ENCODE measurements at regions of chr12 and their contacts with region 1.

Region 1: DNA sequence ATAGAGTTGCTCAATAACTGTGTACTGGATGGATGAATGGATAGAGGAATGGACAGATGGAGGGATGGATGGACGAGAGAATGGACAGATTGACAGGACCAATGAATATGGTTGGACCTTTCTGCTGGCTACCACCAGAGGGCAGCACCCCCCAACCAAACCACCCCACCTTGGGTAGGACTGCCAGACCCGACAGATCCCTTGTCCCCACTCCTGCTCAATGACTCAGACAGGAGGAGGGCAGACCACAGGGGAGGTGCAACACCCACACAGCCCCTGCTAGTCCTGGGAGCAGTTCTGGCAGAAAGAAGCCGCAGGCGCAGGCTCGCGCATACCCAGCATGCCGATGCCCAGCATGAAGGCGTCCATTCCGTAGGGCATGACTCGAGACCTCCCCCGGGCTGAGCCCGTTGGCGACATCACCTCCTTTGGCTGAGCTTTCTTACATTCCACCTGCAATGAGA is 12.4 kb downstream of the MSI1 start:
- DNase-seq: peak; percentile 82
- ATAC-seq: peak; percentile 88
- H3K4me3 Mint-ChIP-seq: no peak overlapping the region
- H3K27ac Mint-ChIP-seq: no peak overlapping the region
- H3K4me1 Mint-ChIP-seq: no peaks in the 10 kb centered on the region
- H3K27me3 Mint-ChIP-seq: peaks cover 27% of the 10 kb centered on the region

Region 2: DNA sequence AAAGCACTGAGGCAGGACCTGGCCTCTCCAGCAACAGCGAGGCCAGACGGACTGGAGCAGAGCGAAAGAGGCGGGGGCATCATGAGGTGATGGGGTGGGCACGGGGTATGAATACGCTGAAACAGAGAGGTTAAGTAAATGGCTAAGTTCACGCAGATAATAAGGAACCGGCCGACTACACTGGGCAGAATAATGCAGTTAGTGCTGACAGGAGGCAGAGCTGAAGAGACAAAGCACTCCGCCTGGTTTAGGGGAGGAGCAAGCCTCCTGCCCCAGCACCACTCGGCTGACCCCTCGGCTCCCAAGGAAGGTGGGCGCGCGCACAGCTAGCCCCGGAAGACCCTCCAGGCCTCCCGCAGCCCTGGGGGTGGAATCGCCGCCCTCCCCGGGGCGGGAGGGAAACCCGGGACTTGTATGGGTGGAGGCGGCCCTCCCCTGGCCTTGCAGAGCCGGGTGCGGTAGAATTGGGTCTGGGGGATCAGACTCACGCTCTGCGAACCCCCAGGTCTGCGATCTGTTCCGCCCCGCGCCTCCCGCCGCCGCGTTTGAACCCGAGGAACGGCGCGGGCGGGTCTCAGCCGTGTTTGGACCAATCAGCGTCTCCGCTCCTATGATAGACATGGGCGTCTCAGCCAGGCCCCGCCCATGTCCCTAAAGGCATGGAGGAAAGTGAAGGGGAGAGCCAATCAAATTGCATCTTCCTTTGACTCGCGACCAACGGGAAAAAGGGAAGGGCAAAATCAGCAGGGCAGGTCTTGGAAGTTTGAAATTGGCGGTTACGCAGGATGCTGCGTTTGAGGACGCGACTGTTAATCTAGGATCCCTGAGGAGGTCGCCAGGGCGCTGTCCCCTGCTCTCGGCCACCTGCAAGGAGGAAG is 479.6 kb before region 1 on chr12 and contains the start of gene CIT:
- CTCF ChIA-PET with region 1: no interaction called
- POLR2A ChIA-PET with region 1: no interaction called
- DNase-seq: peak; percentile 92
- ATAC-seq: peak; percentile 100
- H3K4me3 Mint-ChIP-seq: peak within 1 kb of the TSS; percentile 92
- H3K27ac Mint-ChIP-seq: peak within 1 kb of the TSS; percentile 80
- H3K4me1 Mint-ChIP-seq: peaks cover 24% of the 10 kb centered on the region
- H3K27me3 Mint-ChIP-seq: peaks cover 14% of the 10 kb centered on the region
- total RNA-seq, gene CIT: 111 to 115 TPM

Region 3: DNA sequence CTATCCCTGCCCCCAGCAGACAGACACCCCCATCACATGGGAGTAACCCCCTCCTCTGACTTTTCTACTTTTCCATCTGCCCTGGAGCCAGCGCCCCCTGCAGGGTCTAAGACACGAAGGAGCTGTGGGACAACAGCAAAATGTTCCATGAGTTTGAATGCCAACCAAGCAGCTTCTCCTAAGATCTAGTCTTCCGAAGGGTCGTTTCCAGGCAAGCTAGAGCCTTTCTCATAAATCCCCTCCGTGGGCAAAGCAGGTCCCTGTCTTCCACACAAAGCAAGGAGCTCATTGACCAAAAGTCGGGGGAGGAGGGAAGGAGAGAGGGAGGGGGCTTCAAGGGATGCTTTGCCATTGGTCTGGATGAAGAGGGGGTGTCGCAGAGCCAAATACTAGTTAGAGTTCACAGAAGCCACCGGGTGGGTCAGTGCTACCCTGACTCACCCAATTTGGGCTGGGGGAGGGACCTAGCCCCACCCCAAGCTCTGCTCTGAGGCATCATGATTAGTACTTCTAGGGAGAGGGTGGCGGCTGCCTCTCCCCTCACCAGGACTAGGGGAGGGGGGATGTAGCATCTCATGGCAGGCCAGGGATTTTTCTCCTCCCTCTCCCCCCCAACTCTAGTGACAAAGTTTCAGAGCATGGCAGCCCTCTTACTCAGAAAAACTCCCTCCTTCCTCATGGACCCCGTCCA is 10.8 kb after region 1 on chr12:
- CTCF ChIA-PET with region 1: interaction called, 17 read pairs
- POLR2A ChIA-PET with region 1: no interaction called
- DNase-seq: no peak
- ATAC-seq: no peak
- H3K4me3 Mint-ChIP-seq: no peak overlapping the region
- H3K27ac Mint-ChIP-seq: no peak overlapping the region
- H3K4me1 Mint-ChIP-seq: peaks cover 10% of the 10 kb centered on the region
- H3K27me3 Mint-ChIP-seq: peaks cover 70% of the 10 kb centered on the region